ENCODE measurements at regions of chr12 and their contacts with region 1.

Region 1: DNA sequence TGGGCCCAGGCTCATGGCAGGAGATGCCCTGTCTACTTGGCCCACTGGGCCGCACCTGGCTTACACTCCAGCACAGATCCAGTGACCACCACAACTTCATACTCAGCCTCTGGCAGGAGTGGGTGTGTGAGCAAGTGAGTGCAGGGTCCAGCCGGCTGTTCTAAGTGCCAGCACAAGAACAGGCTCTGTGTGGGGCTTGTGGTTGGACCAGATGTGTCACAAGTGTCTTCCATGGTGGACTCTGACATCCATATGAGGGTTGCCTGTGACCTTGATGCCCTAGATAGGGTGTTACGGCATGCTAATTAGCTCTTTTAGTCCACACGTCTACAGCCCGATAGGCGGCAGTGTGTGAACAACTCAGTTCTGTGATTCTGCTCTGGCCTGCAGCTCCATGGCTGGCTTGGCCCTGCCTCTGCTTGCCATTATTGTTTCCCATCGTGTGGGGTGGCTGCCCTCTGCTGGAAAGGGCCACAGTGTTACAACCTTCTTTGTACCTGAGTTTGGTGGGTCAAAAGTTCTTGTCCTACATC is 1089.1 kb downstream of the SLC6A15 start:
- DNase-seq: peak; percentile 15
- H3K4me3 Mint-ChIP-seq: no peak overlapping the region
- H3K27ac Mint-ChIP-seq: no peak overlapping the region
- H3K4me1 Mint-ChIP-seq: no peaks in the 10 kb centered on the region
- H3K27me3 Mint-ChIP-seq: no peaks in the 10 kb centered on the region

Region 2: GRCh38 chr12:83005534-83006197 is 817.8 kb before region 1 on chr12:
- intact Hi-C with region 1: loop called (anchors 10 kb)
- DNase-seq: no peak
- H3K4me3 Mint-ChIP-seq: no peak overlapping the region
- H3K27ac Mint-ChIP-seq: no peak overlapping the region
- H3K4me1 Mint-ChIP-seq: no peaks in the 10 kb centered on the region
- H3K27me3 Mint-ChIP-seq: no peaks in the 10 kb centered on the region

Region 3: DNA sequence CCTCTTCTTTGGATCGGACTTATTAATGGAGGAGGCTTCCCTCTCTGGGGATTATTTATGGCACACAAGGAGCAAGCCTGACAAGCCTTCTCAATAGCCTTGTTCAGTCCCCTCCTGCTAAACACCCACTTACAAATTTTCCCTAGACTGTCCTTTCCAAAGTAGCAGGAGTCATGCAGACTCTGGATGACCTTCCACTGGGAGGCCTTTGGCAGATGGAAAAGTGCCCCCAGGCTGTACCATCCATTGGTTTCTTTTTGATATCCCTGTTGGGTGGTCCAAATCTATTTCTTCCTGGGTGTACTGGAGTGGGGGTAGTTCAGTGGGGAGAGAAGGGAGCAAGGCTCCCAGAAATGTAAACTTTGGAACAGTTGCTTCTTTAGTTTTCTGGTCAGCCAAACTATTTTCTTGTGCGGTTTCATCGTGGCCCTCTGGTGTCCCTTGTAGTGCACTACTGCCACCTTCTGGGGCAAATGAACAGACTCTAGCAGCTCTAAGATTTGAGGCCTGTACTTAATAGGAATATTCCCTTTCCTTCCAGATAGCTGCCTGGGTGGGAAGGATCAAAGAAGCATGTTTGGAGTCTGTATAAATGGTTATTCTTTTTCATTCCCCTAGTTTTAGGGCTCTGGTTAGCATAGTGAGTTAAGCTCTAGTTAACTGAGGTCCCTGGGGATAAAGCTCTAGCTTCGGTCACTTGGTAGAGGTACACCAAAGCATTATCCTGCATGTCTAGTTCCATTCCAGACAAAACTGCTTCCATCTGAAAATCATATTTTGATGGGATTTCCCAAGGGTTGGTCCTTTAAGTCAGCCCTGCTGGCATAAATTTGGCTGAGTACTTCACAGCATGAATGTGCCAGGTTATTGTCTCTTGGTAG is 679.6 kb after region 1 on chr12:
- intact Hi-C with region 1: loop called (anchors 2 kb)
- DNase-seq: no peak
- H3K4me3 Mint-ChIP-seq: no peak overlapping the region
- H3K27ac Mint-ChIP-seq: no peak overlapping the region
- H3K4me1 Mint-ChIP-seq: no peaks in the 10 kb centered on the region
- H3K27me3 Mint-ChIP-seq: no peaks in the 10 kb centered on the region